ACHN (cell line): ENCODE measurements at regions of chr1 and their contacts with region 1.

Region 1: DNA sequence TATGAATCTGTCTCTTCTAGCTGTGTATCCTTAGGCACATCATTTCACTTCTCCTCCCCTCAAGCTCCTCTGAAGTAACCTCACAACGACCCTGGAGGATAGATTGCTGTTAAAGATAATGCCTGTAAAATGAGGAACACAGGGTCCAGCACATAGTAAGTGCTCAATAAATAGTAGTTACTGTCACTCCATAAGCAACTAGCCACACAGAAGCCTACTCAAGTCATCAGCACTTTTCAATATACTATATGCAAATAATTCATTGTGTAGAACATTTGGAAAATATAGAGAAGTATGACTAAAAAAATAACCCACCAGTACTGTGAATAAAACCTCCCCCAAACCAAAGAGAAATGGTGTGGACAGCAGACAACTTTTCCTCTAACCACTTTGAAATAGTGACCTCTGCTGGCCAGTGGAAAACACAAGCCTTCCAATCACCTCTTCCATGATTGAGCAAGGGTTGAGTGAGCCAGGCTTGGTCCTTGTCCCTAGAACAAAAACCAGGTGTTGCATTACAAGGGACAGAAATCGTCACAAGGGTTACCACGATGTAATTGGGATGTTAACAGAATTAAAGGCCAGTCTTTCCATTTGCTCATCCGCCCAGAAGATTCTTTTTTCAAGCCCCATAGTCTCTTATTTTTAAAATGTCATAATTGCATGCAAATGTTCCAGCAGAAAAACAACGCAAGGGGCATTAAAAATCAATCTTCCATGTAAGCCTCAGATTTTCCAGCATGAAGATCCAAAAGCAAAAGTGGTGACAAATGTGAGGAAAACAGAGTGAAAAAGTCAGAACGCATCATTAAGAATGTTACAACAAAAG is 15.7 kb upstream of the GLIS1 start:
- DNase-seq: peak; percentile 65

Region 2: DNA sequence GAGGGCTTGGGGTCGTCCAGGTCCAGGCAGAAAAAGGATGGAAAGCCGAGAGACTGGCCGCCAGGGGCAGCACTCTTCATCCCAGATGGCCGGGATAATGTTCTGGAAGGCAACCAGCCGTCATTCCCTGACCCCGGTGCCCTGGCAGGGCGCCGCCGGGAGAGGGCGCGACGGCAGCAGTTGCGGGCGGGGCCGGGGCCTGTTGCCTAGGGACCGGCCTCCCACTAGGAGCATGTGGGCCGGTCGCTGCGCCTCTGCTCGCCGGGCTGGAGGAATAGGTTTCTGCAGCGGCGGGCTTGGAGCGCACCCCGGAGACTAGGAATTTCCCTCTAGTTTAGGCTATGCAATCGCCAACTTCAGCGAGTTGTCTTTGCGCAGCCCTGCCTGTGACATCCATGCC is 284.5 kb before region 1 on chr1:
- in situ Hi-C with region 1: loop called (anchors 25 kb)
- DNase-seq: no peak

Region 3: DNA sequence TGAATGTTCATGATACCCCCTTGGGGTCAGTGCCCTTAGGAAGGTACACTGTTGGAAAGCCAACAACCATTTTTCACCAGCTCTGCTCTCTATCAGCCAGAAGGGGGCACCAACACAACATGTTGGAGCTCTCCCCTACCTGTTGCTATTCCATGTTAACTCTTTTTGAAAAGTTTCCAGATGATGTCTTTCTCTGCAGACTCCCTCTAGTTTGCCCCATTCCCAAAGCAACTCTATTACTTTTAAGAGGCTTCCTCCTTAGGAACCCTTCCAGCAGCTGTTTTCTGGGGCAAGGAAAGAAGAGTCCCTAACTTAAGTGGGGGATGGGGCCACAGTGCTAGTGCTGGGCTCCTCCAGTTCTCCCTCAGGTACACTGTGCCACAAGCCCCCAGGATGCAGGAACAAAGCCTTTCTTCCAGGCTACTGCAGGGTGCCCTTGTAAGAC is 106.3 kb after region 1 on chr1:
- in situ Hi-C with region 1: no loop called
- DNase-seq: peak; percentile 59